Ovary (tissue), 10 donors: ENCODE measurements at regions of chr2 and their contacts with region 1.

Region 1: DNA sequence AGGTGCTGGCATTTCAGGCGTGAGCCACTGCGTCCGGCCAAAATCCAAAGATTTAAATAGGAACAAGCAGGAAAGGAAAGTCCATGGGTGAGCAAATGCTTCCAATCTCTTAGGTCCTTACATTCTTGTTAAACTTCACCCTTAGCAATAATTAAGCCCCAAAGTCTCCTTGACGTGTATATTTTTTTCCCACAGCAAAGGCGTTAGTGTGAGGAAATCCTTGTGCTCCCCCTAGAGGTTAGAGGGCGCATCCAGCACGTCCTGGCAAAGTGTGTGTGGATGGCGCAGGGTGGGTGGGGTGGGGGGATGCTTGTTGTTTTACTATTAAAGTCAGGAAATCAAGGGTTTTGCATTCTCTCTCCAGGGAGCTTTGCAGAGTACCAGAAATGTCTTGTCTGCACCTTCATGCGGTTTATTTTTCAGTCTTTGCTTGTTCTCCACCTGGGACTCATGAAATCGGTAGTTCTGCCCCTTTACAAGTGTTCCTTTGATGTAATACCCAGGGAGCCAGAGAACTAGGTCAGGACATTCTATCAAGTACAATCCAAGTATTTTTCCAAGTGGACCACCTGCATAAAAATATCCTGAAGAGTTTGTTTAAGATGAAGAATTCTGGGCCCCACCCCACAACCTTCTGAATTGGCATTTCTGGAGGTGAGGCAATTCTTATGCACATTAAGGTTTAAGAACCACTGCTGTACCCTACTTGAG is 22.2 kb upstream of the ITSN2 start:
- DNase-seq: peak; percentile 44 to 73 (median 62)
- H3K4me3 ChIP-seq: no peak overlapping the region
- H3K27ac ChIP-seq: no peak overlapping the region
- H3K4me1 ChIP-seq: no peaks in the 10 kb centered on the region
- H3K27me3 ChIP-seq: no peaks in the 10 kb centered on the region
- CTCF ChIP-seq: peak; percentile 32 to 51 (median 33)
- EP300 ChIP-seq: no peak
- POLR2A ChIP-seq: no peak

Region 2: DNA sequence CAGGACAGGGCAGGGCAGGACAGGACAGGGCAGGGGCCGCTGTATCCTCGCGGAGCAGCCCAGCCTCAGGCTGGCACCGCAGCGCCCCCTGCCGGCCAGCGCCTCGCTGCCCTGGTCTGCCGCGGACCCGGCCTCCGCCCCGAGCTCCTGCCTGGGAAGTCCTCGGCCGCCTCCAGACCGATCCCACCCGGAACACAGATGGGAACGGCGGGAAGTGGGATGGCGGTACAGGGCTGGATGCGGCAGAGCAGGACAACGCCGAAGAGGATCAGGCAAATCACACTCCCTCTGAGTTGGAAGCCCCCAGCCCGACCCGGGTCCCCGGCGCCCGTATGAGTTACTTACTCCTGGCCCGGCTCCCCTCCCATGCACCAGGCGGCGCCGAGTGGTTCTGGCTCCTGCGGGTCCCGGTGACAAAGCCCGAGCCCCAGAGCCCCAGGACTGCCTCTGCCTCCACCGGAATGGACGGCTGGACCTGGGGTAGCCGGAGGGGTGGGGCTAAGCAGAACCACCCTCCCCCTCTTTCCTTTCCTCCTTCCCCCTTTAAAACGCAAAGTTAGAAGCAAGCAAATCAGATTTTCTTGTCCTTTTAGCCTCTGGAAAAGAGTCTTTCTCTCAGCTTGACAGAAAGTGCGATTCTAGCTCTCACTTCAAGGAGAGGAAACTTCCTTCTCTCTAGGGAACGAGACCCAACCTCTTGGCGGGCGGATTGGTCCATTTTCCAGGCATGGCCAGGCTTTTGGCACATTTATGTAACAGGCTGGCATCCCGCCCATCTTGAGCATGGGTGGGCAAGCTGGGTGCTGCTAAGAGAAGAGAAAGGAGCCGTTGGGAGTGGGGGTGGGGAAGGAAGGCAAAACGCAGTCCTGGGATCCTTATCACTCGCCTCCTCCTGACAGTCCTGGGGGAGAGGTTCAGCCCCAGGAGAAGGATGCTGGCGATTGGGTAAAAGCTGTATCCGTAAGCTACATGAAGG is 297.8 kb before region 1 on chr2 and contains the start of gene TP53I3:
- intact Hi-C with region 1: loop called in 1 of 4 experiments (anchors 5 kb)
- DNase-seq: peak; percentile 82 to 92 (median 88)
- H3K4me3 ChIP-seq: peak within 1 kb of the TSS; percentile 55
- H3K27ac ChIP-seq: peak within 1 kb of the TSS; percentile 65 to 69
- H3K4me1 ChIP-seq: peaks cover 5% of the 10 kb centered on the region
- H3K27me3 ChIP-seq: no peaks in the 10 kb centered on the region
- CTCF ChIP-seq: peak; percentile 94 to 98 (median 97)
- EP300 ChIP-seq: no peak
- POLR2A ChIP-seq: peak; percentile 53
- total RNA-seq, gene TP53I3: 1.6 to 28.1 (median 10.3) TPM

Region 3: GRCh38 chr2:24228470-24228869 is 154.0 kb before region 1 on chr2:
- intact Hi-C with region 1: loop called in 1 of 4 experiments (anchors 5 kb)
- DNase-seq: no peak
- H3K4me3 ChIP-seq: no peak overlapping the region
- H3K27ac ChIP-seq: no peak overlapping the region
- H3K4me1 ChIP-seq: no peaks in the 10 kb centered on the region
- H3K27me3 ChIP-seq: no peaks in the 10 kb centered on the region
- CTCF ChIP-seq: no peak
- EP300 ChIP-seq: no peak
- POLR2A ChIP-seq: no peak